OCI-LY7 (cell line): ENCODE measurements at regions of chr6 and their contacts with region 1.

Region 1: DNA sequence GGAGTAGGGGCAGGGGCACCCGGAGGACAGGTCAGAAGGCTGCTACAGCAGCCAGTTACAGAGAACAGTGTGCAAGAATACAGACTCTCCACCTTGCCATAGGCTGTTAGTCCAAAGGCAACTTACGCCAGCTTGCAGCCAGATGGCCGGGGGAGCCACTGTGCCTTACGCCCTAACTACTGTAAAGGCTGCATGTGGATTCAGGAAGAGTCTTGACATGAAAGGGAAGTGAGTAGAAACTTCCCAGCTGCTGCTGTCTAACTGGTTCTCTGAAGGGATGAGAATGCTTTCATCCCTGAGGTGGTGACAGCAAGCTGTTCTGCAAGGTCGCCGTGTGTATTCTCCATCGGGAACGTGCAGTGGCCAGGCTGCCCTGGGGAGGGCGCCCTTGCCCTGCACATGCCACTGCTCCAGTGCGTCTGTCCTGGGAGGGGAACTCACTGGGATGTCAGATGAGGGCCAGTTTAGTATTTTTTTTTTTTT is 46.1 kb downstream of the LYRM4 start:
- DNase-seq: peak; percentile 12
- H3K4me3 ChIP-seq: no peak overlapping the region
- H3K27ac ChIP-seq: no peak overlapping the region
- H3K4me1 ChIP-seq: peaks cover 9% of the 10 kb centered on the region
- CTCF ChIP-seq: peak; percentile 74

Region 2: GRCh38 chr6:5302995-5303622 is 88.5 kb after region 1 on chr6:
- CTCF ChIA-PET with region 1: no interaction called
- POLR2A ChIA-PET with region 1: no interaction called
- intact Hi-C with region 1: loop called (anchors 5 kb)
- DNase-seq: peak; percentile 59
- H3K4me3 ChIP-seq: no peak overlapping the region
- H3K27ac ChIP-seq: no peak overlapping the region
- H3K4me1 ChIP-seq: peaks cover 7% of the 10 kb centered on the region
- CTCF ChIP-seq: peak; percentile 74

Region 3: GRCh38 chr6:5398530-5398929 is 183.9 kb after region 1 on chr6:
- CTCF ChIA-PET with region 1: no interaction called
- POLR2A ChIA-PET with region 1: no interaction called
- intact Hi-C with region 1: loop called (anchors 5 kb)
- DNase-seq: peak; percentile 63
- H3K4me3 ChIP-seq: no peak overlapping the region
- H3K27ac ChIP-seq: no peak overlapping the region
- H3K4me1 ChIP-seq: no peaks in the 10 kb centered on the region
- CTCF ChIP-seq: peak; percentile 82